PC-9 (cell line): ENCODE measurements at regions of chr20 and their contacts with region 1.

Region 1: DNA sequence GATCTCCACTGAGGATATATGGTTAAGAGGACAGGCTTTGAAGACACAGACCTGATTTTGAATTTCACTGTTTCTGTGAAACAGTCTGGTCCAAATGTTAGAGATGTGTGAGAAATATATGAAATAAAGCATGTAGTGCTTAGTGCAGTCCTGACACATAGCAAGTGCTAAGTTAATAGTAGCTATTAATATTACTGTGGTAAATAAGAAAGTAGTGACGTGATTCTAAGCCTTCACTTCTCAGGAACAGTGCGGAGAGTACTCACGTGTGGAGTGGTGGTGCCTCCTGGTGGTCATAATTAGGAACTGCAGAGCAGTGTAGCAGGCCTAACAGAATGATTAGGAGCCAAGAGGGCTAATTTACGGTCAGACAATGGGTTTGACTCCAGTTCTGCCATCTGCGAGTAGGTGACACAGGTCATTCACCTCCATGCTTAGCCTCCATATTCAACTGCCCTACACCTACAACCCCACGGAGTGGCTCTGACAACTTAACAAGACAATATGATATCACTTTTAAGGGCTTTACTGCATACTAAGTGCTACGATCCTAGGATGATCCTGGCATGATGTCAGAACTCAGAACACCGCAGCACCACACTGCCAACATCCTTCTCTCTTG is 106.2 kb downstream of the JPH2 start:
- DNase-seq: peak; percentile 58 to 80
- H3K4me3 ChIP-seq: no peak overlapping the region
- H3K27ac ChIP-seq: no peak overlapping the region
- H3K4me1 ChIP-seq: peaks cover 17% of the 10 kb centered on the region
- H3K27me3 ChIP-seq: no peaks in the 10 kb centered on the region
- CTCF ChIP-seq: peak; percentile 100

Region 2: GRCh38 chr20:43448748-43449535 is 631.8 kb before region 1 on chr20:
- CTCF ChIA-PET with region 1: interaction called, 4 read pairs
- POLR2A ChIA-PET with region 1: no interaction called
- intact Hi-C with region 1: loop called (anchors 1 kb)
- DNase-seq: peak in 1 of 2 experiments; percentile 59
- H3K4me3 ChIP-seq: no peak overlapping the region
- H3K27ac ChIP-seq: no peak overlapping the region
- H3K4me1 ChIP-seq: no peaks in the 10 kb centered on the region
- H3K27me3 ChIP-seq: peaks cover 5% of the 10 kb centered on the region
- CTCF ChIP-seq: peak; percentile 92

Region 3: GRCh38 chr20:43691928-43692524 is 388.7 kb before region 1 on chr20:
- CTCF ChIA-PET with region 1: no interaction called
- POLR2A ChIA-PET with region 1: no interaction called
- intact Hi-C with region 1: loop called (anchors 1 kb)
- DNase-seq: peak; percentile 45 to 60
- H3K4me3 ChIP-seq: no peak overlapping the region
- H3K27ac ChIP-seq: no peak overlapping the region
- H3K4me1 ChIP-seq: no peaks in the 10 kb centered on the region
- H3K27me3 ChIP-seq: no peaks in the 10 kb centered on the region
- CTCF ChIP-seq: peak; percentile 85

Region 4: DNA sequence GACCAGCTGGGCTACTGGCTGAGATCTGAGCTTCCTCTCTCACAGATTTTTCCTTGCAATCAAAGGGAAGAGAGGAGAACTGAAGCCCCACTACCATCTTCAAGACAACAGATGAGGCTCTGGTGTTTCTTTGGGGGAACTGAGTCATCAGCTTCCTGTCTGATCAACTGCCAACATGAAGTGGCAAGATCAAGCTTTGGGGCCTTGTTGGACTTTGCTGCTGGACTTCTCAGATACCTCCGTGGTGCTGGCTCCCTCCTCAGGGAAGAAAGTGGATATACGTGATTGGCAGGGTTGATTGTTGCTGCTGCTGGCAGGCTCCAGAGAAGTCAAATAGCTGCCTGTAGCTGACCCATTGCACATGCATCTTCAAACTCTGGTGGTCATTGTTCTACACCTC is 169.7 kb before region 1 on chr20:
- CTCF ChIA-PET with region 1: no interaction called
- POLR2A ChIA-PET with region 1: no interaction called
- intact Hi-C with region 1: loop called (anchors 1 kb)
- DNase-seq: peak; percentile 40 to 77
- H3K4me3 ChIP-seq: no peak overlapping the region
- H3K27ac ChIP-seq: no peak overlapping the region
- H3K4me1 ChIP-seq: peaks cover 22% of the 10 kb centered on the region
- H3K27me3 ChIP-seq: no peaks in the 10 kb centered on the region
- CTCF ChIP-seq: peak; percentile 69

Region 5: GRCh38 chr20:43955062-43955749 is 125.6 kb before region 1 on chr20:
- CTCF ChIA-PET with region 1: interaction called, 12 read pairs
- POLR2A ChIA-PET with region 1: no interaction called
- intact Hi-C with region 1: no loop called
- DNase-seq: peak; percentile 80 to 99
- H3K4me3 ChIP-seq: peak overlapping the region; percentile 22; the same call in 1 of the 2 replicates
- H3K27ac ChIP-seq: peak overlapping the region; percentile 97
- H3K4me1 ChIP-seq: peaks cover 77% of the 10 kb centered on the region
- H3K27me3 ChIP-seq: no peaks in the 10 kb centered on the region
- CTCF ChIP-seq: no peak

Region 6: GRCh38 chr20:44222633-44223368 is 142.0 kb after region 1 on chr20:
- CTCF ChIA-PET with region 1: no interaction called
- POLR2A ChIA-PET with region 1: no interaction called
- intact Hi-C with region 1: no loop called
- DNase-seq: no peak
- H3K4me3 ChIP-seq: no peak overlapping the region
- H3K27ac ChIP-seq: no peak overlapping the region
- H3K4me1 ChIP-seq: no peaks in the 10 kb centered on the region
- H3K27me3 ChIP-seq: no peaks in the 10 kb centered on the region
- CTCF ChIP-seq: no peak